ENCODE measurements at regions of chr12 and their contacts with region 1.

Region 1: GRCh38 chr12:47773062-47773857 is at the start of gene SLC48A1:
- DNase-seq: peak; percentile 64
- ATAC-seq: peak; percentile 71
- H3K4me3 Mint-ChIP-seq: peak within 1 kb of the TSS; percentile 87
- H3K27ac Mint-ChIP-seq: peak within 1 kb of the TSS; percentile 52
- H3K4me1 Mint-ChIP-seq: peaks cover 16% of the 10 kb centered on the region
- H3K27me3 Mint-ChIP-seq: no peaks in the 10 kb centered on the region
- CTCF ChIP-seq: no peak
- total RNA-seq, gene SLC48A1: 8.8 to 10.2 TPM

Region 2: DNA sequence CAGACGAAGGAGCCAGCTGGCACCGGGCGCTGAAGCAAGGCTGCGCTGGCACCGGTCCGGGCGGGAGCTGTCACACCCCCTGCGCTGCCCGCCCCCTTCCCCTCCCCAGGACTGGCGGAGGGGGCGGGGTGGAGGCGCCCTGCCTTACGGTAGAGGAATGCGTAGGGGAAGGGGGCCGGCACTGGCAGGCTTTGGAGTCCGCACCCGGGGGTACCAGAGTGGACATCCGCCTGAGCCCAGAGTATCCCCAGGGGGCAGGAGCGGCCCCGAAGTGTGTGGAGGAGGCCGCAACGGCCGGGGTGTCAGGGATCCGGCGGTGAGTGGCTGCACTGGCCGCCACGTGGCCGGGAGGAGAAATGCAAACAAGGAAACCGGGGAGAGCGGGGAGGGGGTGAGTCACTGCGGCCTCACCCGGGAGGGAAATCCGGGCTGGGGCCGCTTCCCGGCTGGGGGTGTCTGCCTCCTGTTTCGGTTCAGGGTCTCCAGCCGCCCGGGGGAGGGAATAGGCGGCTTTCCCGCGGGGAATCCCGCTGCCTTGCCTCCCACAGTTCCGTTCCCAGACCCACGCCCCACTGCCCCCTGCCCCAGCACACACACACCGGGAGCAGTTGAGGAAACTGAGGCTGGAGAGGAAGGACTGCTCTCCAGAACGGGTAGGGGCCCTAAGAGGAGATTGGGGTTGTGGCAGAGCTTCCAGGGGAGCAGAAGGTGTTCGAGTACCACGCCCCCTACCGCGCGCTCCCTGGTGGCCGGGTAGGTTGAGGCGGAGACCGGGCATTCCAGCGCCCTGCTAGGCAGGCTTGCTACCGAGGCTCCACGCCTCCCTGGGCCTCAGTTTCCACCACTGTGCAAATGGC is 14.2 kb before region 1 on chr12 and contains the start of gene RAPGEF3:
- CTCF ChIA-PET with region 1: interaction called, 131 read pairs
- POLR2A ChIA-PET with region 1: interaction called, 6 read pairs
- intact Hi-C with region 1: no loop called
- DNase-seq: peak; percentile 71
- ATAC-seq: peak; percentile 65
- H3K4me3 Mint-ChIP-seq: peak within 1 kb of the TSS; percentile 65
- H3K27ac Mint-ChIP-seq: no peak within 1 kb of the TSS
- H3K4me1 Mint-ChIP-seq: peaks cover 30% of the 10 kb centered on the region
- H3K27me3 Mint-ChIP-seq: no peaks in the 10 kb centered on the region
- CTCF ChIP-seq: peak; percentile 68
- total RNA-seq, gene RAPGEF3: 0.56 to 0.58 TPM